PC-3 (cell line): ENCODE measurements at regions of chr1 and their contacts with region 1.

Region 1: DNA sequence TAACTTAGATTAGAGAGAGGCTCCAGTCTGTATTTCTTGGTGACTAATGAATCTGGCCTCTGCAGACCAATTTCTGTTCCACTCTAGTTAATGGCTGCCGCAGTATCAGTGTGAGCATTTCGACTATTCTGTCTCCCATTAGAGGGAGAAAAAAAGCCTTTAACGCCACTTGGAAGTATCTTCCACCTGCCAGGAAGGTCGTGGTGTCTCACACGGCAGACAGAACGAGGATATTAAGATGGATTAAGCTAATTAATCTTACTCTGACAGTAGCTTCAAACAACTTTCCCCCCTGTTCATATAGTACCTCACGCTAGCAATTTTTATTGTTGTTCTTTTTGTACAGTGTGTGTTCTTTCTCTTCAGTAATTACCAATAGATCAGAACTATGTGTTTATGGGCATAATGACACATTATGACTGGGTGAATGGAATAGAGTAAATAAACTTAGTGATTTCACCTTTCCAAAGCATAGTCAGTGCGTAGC is 153.8 kb downstream of the ADGRL2 start:
- DNase-seq: no peak
- ATAC-seq: no peak
- H3K4me3 ChIP-seq: no peak overlapping the region
- H3K27ac ChIP-seq: no peak overlapping the region
- H3K4me1 ChIP-seq: no peaks in the 10 kb centered on the region
- H3K27me3 ChIP-seq: peaks cover 63% of the 10 kb centered on the region
- CTCF ChIP-seq: no peak

Region 2: DNA sequence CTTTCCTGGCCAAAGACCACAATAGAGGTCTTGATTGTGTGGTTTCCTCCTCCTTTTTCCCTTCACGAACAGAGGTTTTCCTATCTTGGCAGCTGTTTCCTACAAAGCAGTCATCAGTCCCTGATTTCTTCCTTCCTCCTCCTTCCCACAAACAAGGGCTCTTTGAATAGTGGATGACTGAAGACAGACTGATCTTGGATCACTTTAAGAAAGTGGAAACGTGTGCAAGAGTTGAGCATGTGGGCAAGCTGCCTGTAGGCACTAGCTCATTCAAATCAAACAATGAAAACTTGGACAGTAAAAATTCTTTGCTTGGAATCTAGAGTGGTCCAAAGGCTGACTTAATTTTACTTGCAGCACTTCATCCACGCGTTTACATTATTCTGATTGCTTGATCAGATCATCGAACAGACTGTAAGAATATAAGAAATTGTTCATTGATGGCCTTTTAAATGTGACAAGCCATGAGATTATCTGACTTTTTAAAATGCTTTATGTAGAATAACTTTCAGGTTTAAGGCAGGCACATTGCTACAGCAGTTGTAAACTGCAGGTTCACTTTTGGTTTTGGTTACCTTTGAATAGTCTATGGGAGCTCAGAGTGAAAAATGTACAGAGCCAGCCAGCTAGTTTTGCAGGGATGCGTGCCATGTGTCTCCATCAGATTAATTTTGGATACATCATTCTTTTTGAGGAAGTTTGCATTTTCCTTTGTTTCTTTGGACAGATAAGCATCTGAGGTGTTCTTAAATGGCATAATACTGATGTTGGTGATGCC is 119.5 kb before region 1 on chr1:
- CTCF ChIA-PET with region 1: no interaction called
- POLR2A ChIA-PET with region 1: no interaction called
- intact Hi-C with region 1: no loop called
- DNase-seq: no peak
- ATAC-seq: no peak
- H3K4me3 ChIP-seq: no peak overlapping the region
- H3K27ac ChIP-seq: no peak overlapping the region
- H3K4me1 ChIP-seq: no peaks in the 10 kb centered on the region
- H3K27me3 ChIP-seq: peaks cover 75% of the 10 kb centered on the region
- CTCF ChIP-seq: no peak

Region 3: DNA sequence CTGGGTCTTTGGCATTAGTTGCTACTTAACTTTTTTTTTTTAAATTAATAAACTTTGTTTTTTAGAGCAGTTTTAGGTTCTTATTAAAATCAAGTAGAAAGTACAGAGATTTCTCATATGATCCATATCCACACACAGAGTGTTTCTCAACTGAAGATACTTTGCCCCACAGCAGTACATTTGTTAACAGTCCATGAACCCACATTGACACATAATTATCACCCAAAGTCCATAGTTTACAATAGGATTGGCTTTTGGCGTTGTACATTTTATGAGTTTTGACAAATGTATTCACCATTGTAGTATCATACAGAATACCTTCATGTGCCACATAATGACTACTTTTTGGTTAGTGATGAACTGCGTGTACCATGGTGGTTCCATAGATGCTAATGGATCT is 47.0 kb before region 1 on chr1:
- CTCF ChIA-PET with region 1: no interaction called
- POLR2A ChIA-PET with region 1: interaction called, 15 read pairs
- intact Hi-C with region 1: no loop called
- DNase-seq: no peak
- ATAC-seq: no peak
- H3K4me3 ChIP-seq: no peak overlapping the region
- H3K27ac ChIP-seq: no peak overlapping the region
- H3K4me1 ChIP-seq: no peaks in the 10 kb centered on the region
- H3K27me3 ChIP-seq: 0 out of 2 replicates have a peak, but pooled peaks cover 10% of the 10 kb centered on the region
- CTCF ChIP-seq: no peak